ENCODE measurements at regions of chr18 and their contacts with region 1.

Region 1: DNA sequence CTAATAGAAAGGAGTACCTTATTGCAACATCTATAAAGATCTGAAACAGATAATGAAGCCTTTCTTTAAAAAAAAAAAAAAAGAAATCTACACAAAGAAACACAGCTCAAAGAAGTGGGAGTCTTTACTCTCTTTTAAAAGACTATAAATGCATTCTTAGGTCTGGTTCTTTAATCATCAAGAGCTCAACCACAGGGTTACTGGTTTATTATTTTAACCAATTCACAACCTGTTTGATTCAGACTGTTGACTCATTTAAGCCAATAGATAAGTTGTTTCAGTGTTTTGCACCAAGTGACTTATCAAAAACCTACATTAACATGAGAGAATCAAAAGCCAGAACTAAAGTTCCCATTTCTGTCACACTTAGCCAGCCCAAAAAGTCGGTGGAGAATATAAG is 93.1 kb downstream of the TCF4 start:
- DNase-seq: no peak
- H3K4me3 ChIP-seq: no peak overlapping the region
- H3K4me3 Mint-ChIP-seq: no peak overlapping the region
- H3K27ac Mint-ChIP-seq: no peak overlapping the region
- H3K4me1 ChIP-seq: 0 out of 2 replicates have a peak, but pooled peaks cover 8% of the 10 kb centered on the region
- H3K4me1 Mint-ChIP-seq: peaks cover under 1% of the 10 kb centered on the region
- H3K27me3 ChIP-seq: no peaks in the 10 kb centered on the region
- H3K27me3 Mint-ChIP-seq: no peaks in the 10 kb centered on the region
- CTCF ChIP-seq: no peak

Region 2: DNA sequence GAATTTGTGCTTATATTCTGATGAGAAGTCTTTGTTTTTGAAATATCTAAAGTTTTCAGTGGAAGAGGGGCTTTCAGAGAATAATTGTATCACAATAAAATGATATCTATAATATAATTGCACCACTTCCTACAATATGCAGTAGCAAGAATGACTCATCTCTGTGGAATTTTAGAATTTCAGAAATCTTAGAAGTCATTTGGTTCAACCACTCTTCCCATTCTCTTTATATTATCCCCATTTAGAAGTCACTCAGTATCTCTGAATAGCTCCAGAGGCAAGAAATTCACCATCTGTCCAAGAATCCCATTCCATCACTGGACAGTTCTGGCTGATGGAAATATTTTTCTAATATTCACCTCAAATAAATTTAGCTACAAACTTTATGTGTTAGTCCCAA is 476.3 kb before region 1 on chr18:
- CTCF ChIA-PET with region 1: no interaction called
- POLR2A ChIA-PET with region 1: no interaction called
- intact Hi-C with region 1: loop called (anchors 10 kb)
- DNase-seq: no peak
- H3K4me3 ChIP-seq: no peak overlapping the region
- H3K4me3 Mint-ChIP-seq: no peak overlapping the region
- H3K27ac Mint-ChIP-seq: no peak overlapping the region
- H3K4me1 ChIP-seq: peaks cover 3% of the 10 kb centered on the region; the same call in 1 of the 2 replicates
- H3K4me1 Mint-ChIP-seq: no peaks in the 10 kb centered on the region
- H3K27me3 ChIP-seq: no peaks in the 10 kb centered on the region
- H3K27me3 Mint-ChIP-seq: no peaks in the 10 kb centered on the region
- CTCF ChIP-seq: no peak

Region 3: GRCh38 chr18:55405893-55406406 is 88.9 kb before region 1 on chr18:
- CTCF ChIA-PET with region 1: no interaction called
- POLR2A ChIA-PET with region 1: no interaction called
- intact Hi-C with region 1: loop called (anchors 10 kb)
- DNase-seq: no peak
- H3K4me3 ChIP-seq: no peak overlapping the region
- H3K4me3 Mint-ChIP-seq: no peak overlapping the region
- H3K27ac Mint-ChIP-seq: no peak overlapping the region
- H3K4me1 ChIP-seq: peaks cover 5% of the 10 kb centered on the region; the same call in 1 of the 2 replicates
- H3K4me1 Mint-ChIP-seq: peaks cover 13% of the 10 kb centered on the region
- H3K27me3 ChIP-seq: no peaks in the 10 kb centered on the region
- H3K27me3 Mint-ChIP-seq: no peaks in the 10 kb centered on the region
- CTCF ChIP-seq: no peak

Region 4: GRCh38 chr18:55552526-55553189 is 57.8 kb after region 1 on chr18:
- CTCF ChIA-PET with region 1: no interaction called
- POLR2A ChIA-PET with region 1: no interaction called
- intact Hi-C with region 1: no loop called
- DNase-seq: no peak
- H3K4me3 ChIP-seq: no peak overlapping the region
- H3K4me3 Mint-ChIP-seq: no peak overlapping the region
- H3K27ac Mint-ChIP-seq: no peak overlapping the region
- H3K4me1 ChIP-seq: no peaks in the 10 kb centered on the region
- H3K4me1 Mint-ChIP-seq: no peaks in the 10 kb centered on the region
- H3K27me3 ChIP-seq: no peaks in the 10 kb centered on the region
- H3K27me3 Mint-ChIP-seq: no peaks in the 10 kb centered on the region
- CTCF ChIP-seq: no peak

Measured in Caco-2 (cell line).